HCT116 (cell line): ENCODE measurements at regions of chr1 and their contacts with region 1.

Region 1: GRCh38 chr1:227999056-227999930 is 7.5 kb upstream of the WNT3A start:
- DNase-seq: peak; percentile 71
- ATAC-seq: peak; percentile 94
- H3K4me3 ChIP-seq: no peak overlapping the region
- H3K27ac ChIP-seq: no peak overlapping the region
- H3K4me1 ChIP-seq: no peaks in the 10 kb centered on the region
- H3K27me3 ChIP-seq: no peaks in the 10 kb centered on the region
- CTCF ChIP-seq: peak; percentile 92 to 97 (median 96)
- POLR2A ChIP-seq: no peak
- RAD21 ChIP-seq: peak; percentile 97

Region 2: DNA sequence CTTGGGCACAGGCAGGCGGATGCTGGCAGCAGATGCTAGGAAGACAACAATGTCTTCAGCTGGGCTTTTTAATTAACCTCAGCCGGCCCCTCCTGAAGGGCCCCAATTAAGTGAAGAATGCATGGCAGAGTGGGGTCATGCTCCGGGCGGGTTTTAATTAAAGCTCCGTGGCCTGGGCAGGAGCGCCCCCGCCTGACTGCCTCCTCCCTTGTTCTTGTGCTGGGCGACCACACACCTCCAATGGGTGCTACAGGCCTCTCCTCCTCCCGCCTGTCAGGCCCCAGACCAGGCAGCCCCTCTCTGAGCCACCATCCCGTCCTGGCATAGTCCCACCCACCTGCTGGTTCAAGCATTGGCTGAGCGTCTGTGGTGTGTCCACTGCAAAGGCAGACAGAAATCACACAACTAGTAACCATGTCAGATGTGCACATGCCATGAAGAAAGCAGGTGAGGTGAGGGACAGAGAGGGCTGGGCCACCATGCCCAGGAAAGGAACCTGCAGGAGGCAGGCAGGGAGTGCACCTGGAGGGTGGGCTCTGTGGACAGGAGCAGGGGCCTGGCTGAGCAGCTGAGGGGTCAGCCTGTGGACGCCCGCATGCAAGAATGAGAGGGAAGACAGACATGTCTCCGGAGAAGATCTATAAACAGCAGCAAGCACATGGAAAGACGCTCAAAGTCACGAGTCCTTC is 74.7 kb after region 1 on chr1:
- CTCF ChIA-PET with region 1: interaction called, 16 read pairs
- POLR2A ChIA-PET with region 1: no interaction called
- RAD21 ChIA-PET with region 1: interaction called in 1 of 2 experiments, 3 read pairs
- intact Hi-C with region 1: loop called (anchors 5 kb)
- DNase-seq: no peak
- ATAC-seq: peak; percentile 57
- H3K4me3 ChIP-seq: no peak overlapping the region
- H3K27ac ChIP-seq: no peak overlapping the region
- H3K4me1 ChIP-seq: no peaks in the 10 kb centered on the region; a peak in 1 of 4 replicates
- H3K27me3 ChIP-seq: no peaks in the 10 kb centered on the region
- CTCF ChIP-seq: peak in 1 of 3 experiments; percentile 27; a peak in 1 of 6 replicates
- POLR2A ChIP-seq: no peak
- RAD21 ChIP-seq: no peak; the same call in 1 of the 2 replicates

Region 3: DNA sequence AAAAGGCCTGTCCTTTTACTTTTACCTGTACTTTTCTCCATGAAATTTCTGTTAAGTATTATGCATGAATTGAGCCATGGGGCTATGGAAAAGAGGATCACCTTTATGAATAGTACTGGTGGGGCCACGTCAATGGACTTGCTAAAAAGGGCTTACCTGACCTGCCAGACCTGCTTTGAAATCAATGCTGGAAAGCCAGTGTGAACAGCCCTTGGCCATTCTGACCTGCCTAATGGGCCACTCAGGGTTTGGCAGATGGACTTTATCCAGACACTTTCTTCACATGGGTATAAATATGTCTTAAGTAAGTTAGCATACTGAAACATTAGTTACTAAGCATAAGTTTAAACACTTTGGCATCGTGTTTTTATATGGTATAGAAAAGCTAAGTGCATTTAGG is 132.5 kb after region 1 on chr1:
- CTCF ChIA-PET with region 1: interaction called, 10 read pairs
- POLR2A ChIA-PET with region 1: no interaction called
- RAD21 ChIA-PET with region 1: interaction called in 1 of 2 experiments, 4 read pairs
- intact Hi-C with region 1: no loop called
- DNase-seq: no peak
- ATAC-seq: no peak
- H3K4me3 ChIP-seq: no peak overlapping the region
- H3K27ac ChIP-seq: 0 out of 2 replicates have a peak overlapping the region, but pooled peaks have one; percentile 6
- H3K4me1 ChIP-seq: peaks cover 7 to 18% of the 10 kb centered on the region in 2 experiments
- H3K27me3 ChIP-seq: peaks cover 3% of the 10 kb centered on the region; the same call in 1 of the 2 replicates
- CTCF ChIP-seq: no peak
- POLR2A ChIP-seq: no peak
- RAD21 ChIP-seq: no peak

Region 4: DNA sequence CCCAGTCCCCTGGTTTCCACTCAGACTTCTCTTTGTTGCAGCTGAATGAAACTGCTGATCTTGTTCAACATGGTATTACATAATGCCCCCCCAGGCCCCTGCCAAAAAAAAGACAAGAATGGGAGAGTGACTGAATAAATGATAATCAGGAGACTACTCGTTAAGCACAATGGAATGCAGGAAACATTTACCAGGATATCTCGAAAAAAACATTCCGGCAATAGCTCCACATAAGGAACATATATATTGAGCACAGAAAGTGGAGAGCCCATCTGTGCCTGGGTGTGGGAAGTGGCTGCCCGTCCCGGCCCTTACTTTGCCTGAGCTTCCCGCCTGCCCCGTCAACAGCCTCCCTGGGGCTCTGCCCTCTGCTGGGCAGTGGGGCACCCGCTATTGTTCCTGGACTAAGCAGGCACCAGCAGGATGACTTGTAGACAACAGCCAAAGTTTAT is 394.0 kb after region 1 on chr1:
- CTCF ChIA-PET with region 1: interaction called, 9 read pairs
- POLR2A ChIA-PET with region 1: no interaction called
- RAD21 ChIA-PET with region 1: interaction called in 1 of 2 experiments, 3 read pairs
- intact Hi-C with region 1: loop called (anchors 5 kb)
- DNase-seq: no peak
- ATAC-seq: peak; percentile 79
- H3K4me3 ChIP-seq: no peak overlapping the region
- H3K27ac ChIP-seq: peak overlapping the region; percentile 64
- H3K4me1 ChIP-seq: peaks cover 25 to 33% of the 10 kb centered on the region in 2 experiments
- H3K27me3 ChIP-seq: no peaks in the 10 kb centered on the region
- CTCF ChIP-seq: peak; percentile 63 to 78 (median 73); a peak in 5 of 6 replicates
- POLR2A ChIP-seq: no peak
- RAD21 ChIP-seq: no peak; the same call in 1 of the 2 replicates